Caco-2 (cell line): ENCODE measurements at regions of chr4 and their contacts with region 1.

Region 1: DNA sequence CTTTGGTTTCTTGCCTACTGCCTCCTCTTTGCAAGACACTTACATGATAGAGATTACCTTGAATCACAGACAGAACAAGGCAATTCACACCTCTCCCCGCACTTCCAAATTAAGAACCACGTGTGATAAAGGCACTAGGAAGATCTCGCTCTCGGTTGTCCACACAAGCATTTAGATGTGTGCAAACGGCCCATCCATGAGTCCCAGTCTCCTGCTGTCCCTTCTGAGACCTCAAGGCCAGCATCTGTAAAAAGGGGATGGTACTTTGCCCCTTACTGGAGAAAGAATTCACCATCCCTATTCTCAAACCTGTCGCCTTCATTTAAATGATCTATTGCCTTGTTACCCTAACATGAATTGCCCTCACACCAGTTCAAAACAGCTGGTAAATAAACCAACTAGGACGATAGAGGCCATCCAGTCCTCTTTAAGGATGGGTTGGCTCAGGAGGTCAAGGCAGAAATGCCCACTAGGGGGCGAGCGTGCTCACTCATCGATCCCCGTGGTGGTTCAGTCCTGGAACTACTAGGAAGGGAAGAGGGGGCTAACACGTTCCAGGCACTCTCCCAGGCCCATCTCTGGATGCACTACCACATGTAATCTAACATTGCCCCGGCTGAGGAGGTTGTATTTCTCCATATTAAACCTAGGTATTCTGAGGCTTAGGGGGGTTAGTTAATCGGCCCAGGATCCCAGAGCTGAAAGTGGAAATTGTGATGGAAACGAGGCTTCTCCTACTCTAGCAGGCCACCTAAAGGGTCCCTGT is 95.8 kb downstream of the DHX15 start:
- DNase-seq: peak; percentile 61 to 83
- H3K4me3 ChIP-seq: no peak overlapping the region
- H3K4me3 Mint-ChIP-seq: no peak overlapping the region
- H3K27ac Mint-ChIP-seq: no peak overlapping the region
- H3K4me1 ChIP-seq: no peaks in the 10 kb centered on the region
- H3K4me1 Mint-ChIP-seq: no peaks in the 10 kb centered on the region
- H3K27me3 ChIP-seq: no peaks in the 10 kb centered on the region
- H3K27me3 Mint-ChIP-seq: no peaks in the 10 kb centered on the region
- CTCF ChIP-seq: peak; percentile 76 to 78

Region 2: DNA sequence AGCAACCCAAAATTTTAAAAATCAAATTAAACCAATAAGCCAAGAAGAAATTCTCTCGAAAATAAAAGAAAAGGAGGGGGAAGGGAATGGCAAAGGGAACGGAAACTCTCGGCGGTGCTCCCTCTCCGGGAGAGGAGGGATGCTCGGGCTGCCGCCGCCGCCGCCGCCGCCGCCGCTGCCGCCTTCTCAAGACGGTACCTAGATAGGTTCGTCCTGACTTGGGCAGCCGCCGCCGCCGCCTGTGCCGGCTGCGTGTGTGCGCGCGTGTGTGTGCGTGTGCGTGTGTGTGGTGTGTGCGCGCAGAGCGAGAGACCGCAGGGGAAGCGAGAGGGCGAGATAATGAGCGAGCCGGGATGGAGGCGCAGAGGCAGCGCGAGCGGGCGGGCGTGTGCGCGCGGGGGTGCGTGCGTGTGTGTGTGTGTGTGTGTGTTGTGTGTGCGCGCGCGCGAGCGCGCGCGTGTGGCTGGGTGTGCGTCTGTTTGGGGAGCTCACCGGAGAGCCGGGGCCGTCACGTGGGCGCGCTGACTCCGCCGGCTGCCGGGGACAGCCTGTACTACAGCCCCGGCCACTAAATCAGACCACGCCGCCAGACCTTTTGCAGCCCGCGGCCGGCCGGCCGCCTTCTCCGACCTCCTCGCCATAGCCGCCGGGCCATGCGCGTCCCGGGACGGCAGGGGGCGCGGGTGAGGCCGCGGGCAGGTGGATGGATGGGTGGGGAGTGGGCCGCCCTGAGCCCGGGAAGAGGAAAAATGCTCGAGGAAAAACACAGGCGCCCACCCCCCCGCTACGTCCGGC is 15.9 kb before region 1 on chr4:
- CTCF ChIA-PET with region 1: interaction called, 10 read pairs
- POLR2A ChIA-PET with region 1: no interaction called
- intact Hi-C with region 1: no loop called
- DNase-seq: peak; percentile 81 to 84
- H3K4me3 ChIP-seq: peak overlapping the region; percentile 60
- H3K4me3 Mint-ChIP-seq: peak overlapping the region; percentile 91
- H3K27ac Mint-ChIP-seq: no peak overlapping the region
- H3K4me1 ChIP-seq: peaks cover 15% of the 10 kb centered on the region
- H3K4me1 Mint-ChIP-seq: peaks cover 14% of the 10 kb centered on the region
- H3K27me3 ChIP-seq: peaks cover 2% of the 10 kb centered on the region; the same call in 1 of the 2 replicates
- H3K27me3 Mint-ChIP-seq: peaks cover 48% of the 10 kb centered on the region
- CTCF ChIP-seq: peak; percentile 63 to 89

Region 3: GRCh38 chr4:24686871-24687680 is 198.5 kb after region 1 on chr4:
- CTCF ChIA-PET with region 1: no interaction called
- POLR2A ChIA-PET with region 1: no interaction called
- intact Hi-C with region 1: loop called (anchors 1 kb)
- DNase-seq: peak; percentile 47 to 67
- H3K4me3 ChIP-seq: no peak overlapping the region
- H3K4me3 Mint-ChIP-seq: no peak overlapping the region
- H3K27ac Mint-ChIP-seq: no peak overlapping the region
- H3K4me1 ChIP-seq: peaks cover 6% of the 10 kb centered on the region
- H3K4me1 Mint-ChIP-seq: peaks cover 27% of the 10 kb centered on the region
- H3K27me3 ChIP-seq: no peaks in the 10 kb centered on the region
- H3K27me3 Mint-ChIP-seq: no peaks in the 10 kb centered on the region
- CTCF ChIP-seq: peak; percentile 44 to 74

Region 4: GRCh38 chr4:24701683-24702082 is 213.1 kb after region 1 on chr4:
- CTCF ChIA-PET with region 1: no interaction called
- POLR2A ChIA-PET with region 1: no interaction called
- intact Hi-C with region 1: loop called (anchors 1 kb)
- DNase-seq: no peak
- H3K4me3 ChIP-seq: no peak overlapping the region
- H3K4me3 Mint-ChIP-seq: no peak overlapping the region
- H3K27ac Mint-ChIP-seq: no peak overlapping the region
- H3K4me1 ChIP-seq: no peaks in the 10 kb centered on the region
- H3K4me1 Mint-ChIP-seq: no peaks in the 10 kb centered on the region
- H3K27me3 ChIP-seq: no peaks in the 10 kb centered on the region
- H3K27me3 Mint-ChIP-seq: no peaks in the 10 kb centered on the region
- CTCF ChIP-seq: peak in 1 of 2 experiments; percentile 27

Region 5: DNA sequence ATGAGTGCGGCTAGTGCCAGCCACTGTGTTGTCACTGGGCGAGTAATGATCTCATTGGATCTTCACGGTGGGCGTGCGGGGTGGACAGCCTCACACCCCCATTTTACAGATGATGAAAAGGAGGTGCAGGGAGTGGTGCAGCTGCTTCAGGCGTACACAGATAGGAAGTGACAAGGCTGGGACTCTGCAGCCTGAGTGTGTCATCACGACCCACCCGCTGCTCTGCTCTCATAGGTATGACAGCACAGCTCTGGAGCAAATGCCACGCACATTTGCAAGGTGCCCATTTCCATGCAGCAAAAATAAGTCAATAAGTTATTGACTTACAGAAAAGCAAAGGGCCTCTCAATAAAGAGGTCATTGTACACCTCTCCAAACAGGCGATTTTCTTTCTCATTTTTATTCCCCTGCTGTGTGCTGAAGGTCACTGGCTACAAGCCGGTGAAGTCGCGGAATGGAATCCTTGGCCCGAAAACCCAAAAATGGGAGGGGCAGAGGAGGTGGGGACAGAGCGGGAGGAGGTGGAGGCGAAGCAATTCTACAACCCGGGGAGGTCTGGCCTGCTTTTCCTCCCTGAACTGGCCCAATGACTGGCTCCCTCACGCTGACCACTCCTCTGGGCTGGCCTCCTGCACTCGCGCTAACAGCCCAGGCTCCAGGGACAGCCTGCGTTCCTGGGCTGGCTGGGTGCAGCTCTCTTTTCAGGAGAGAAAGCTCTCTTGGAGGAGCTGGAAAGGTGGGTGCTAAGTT is 306.5 kb after region 1 on chr4 and contains the start of gene SOD3:
- CTCF ChIA-PET with region 1: no interaction called
- POLR2A ChIA-PET with region 1: no interaction called
- intact Hi-C with region 1: loop called (anchors 5 kb)
- DNase-seq: peak; percentile 63 to 66
- H3K4me3 ChIP-seq: peak within 1 kb of the TSS; percentile 15; the same call in 1 of the 2 replicates
- H3K4me3 Mint-ChIP-seq: peak within 1 kb of the TSS; percentile 63
- H3K27ac Mint-ChIP-seq: peak within 1 kb of the TSS; percentile 82
- H3K4me1 ChIP-seq: peaks cover 18% of the 10 kb centered on the region
- H3K4me1 Mint-ChIP-seq: peaks cover 14% of the 10 kb centered on the region
- H3K27me3 ChIP-seq: no peaks in the 10 kb centered on the region
- H3K27me3 Mint-ChIP-seq: no peaks in the 10 kb centered on the region
- CTCF ChIP-seq: no peak
- total RNA-seq, gene SOD3: 3.8 and 6.6 TPM in 2 replicates

Region 6: DNA sequence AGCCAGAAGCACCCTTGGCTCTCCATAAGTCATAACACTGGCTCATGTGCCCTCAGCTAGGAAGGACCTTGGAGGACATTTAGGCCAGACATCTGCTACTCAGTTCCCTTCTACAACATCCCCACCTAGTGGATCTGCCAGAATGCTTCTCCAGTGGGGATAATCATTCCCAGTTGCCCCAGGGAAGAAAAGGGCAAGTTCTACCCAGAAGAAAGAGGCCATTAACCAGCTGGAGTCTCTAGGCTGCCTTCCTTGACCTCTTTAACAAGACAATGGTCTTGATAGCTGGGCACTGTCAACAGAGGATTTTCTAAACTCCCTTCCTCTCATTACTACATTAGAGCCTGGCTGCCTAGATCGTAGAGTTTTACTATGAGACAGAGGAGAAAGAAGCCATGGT is 500.2 kb after region 1 on chr4:
- CTCF ChIA-PET with region 1: no interaction called
- POLR2A ChIA-PET with region 1: no interaction called
- intact Hi-C with region 1: loop called (anchors 5 kb)
- DNase-seq: peak; percentile 46 to 52
- H3K4me3 ChIP-seq: no peak overlapping the region
- H3K4me3 Mint-ChIP-seq: no peak overlapping the region
- H3K27ac Mint-ChIP-seq: no peak overlapping the region
- H3K4me1 ChIP-seq: no peaks in the 10 kb centered on the region
- H3K4me1 Mint-ChIP-seq: no peaks in the 10 kb centered on the region
- H3K27me3 ChIP-seq: no peaks in the 10 kb centered on the region; the same call in 1 of the 2 replicates
- H3K27me3 Mint-ChIP-seq: no peaks in the 10 kb centered on the region
- CTCF ChIP-seq: peak; percentile 14 to 25